ENCODE measurements at regions of chr1 and their contacts with region 1.

Region 1: DNA sequence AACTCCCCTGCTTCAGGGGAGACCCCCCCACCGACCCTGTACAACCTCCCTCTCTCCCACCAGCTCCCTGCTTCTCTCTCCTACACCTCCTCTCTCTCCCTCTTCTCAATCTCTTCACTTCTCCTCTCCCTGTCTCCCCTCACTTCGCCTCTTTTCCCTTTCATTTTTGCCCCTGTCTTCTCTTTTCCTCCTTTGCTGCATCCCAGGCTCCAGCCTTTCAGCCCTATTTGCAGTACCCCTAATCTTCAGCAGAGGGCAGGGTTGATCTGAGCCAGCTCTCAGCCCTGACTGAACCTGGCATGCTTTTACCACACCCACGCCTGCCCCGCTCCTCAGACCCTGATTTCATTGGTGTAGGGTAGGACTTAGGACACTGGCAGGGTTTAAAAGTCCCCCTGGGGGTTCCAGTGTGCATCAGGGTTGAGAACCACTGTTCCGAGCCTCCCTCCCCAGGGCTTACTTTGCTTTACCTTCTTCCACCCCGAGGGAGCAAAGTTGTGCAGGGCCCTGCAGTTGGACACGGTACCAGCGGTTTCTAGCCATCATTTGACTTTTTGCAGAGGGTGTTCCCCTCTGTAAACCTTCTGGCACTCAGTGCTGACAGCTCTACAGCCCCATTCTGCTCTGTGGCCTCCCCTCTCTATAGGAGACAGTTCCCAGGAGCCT is 67.3 kb upstream of the CNTN2 start:
- DNase-seq: peak in 1 of 2 donors; percentile 44
- ATAC-seq: peak in 7 of 8 donors; percentile 66 to 80 (median 73)
- H3K4me3 ChIP-seq: no peak overlapping the region
- H3K27ac ChIP-seq: no peak overlapping the region
- H3K4me1 ChIP-seq: peaks cover 0 to 27% (median 0%) of the 10 kb centered on the region in 9 donors
- H3K27me3 ChIP-seq: peaks cover 0 to 5% (median 0%) of the 10 kb centered on the region in 7 donors
- CTCF ChIP-seq: peak; percentile 58 to 88 (median 81)

Region 2: GRCh38 chr1:205056188-205056611 is 80.5 kb after region 1 on chr1:
- intact Hi-C with region 1: loop called in 2 of 10 experiments (anchors 5 kb)
- DNase-seq: no peak
- ATAC-seq: no peak
- H3K4me3 ChIP-seq: no peak overlapping the region
- H3K27ac ChIP-seq: no peak overlapping the region
- H3K4me1 ChIP-seq: no peaks in the 10 kb centered on the region
- H3K27me3 ChIP-seq: peaks cover 0 to 23% (median 14%) of the 10 kb centered on the region in 7 donors
- CTCF ChIP-seq: no peak

Region 3: DNA sequence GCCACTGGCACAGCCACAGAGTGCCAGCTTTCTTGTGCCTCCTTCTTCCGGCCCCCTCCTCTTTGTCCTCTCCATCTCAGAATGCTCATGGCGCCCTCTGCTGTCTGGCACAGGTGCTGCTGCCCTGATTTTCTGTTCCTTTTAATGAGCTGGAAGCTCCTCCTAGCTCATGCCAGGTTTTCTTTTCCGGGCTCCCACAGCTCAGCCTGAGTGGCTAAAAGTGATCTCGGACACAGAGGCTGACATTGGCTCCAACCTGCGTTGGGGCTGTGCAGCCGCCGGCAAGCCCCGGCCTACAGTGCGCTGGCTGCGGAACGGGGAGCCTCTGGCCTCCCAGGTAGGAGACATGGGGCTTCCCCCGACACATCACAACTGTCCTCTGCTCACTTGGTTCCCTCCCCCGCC is 86.0 kb after region 1 on chr1:
- intact Hi-C with region 1: loop called in 2 of 10 experiments (anchors 5 kb)
- DNase-seq: peak; percentile 70 to 74
- ATAC-seq: peak; percentile 55 to 81 (median 70)
- H3K4me3 ChIP-seq: no peak overlapping the region
- H3K27ac ChIP-seq: no peak overlapping the region
- H3K4me1 ChIP-seq: peaks cover 0 to 7% (median 4%) of the 10 kb centered on the region in 9 donors
- H3K27me3 ChIP-seq: no peaks in the 10 kb centered on the region
- CTCF ChIP-seq: peak; percentile 46 to 95 (median 88)

Region 4: DNA sequence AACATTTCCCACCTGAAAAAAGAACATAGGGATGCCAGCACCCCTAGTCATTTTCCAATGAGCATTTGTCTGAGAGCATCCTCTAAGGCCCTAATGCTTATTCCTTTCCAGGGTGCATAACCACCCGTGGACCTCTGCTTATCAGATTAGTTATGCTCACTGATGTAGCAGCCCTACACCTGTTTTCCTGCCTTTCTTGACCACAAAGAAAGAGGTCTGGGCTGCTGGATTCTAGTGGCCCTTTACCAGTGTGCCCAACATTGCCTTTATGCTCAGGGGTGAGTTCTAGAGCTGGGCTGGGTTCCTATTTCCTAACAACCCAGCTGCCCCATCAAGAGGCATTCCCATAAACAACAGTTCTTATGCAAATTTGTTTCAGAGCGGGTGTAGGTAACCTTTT is 894.5 kb after region 1 on chr1:
- intact Hi-C with region 1: no loop called
- DNase-seq: no peak
- ATAC-seq: no peak
- H3K4me3 ChIP-seq: no peak overlapping the region
- H3K27ac ChIP-seq: no peak overlapping the region
- H3K4me1 ChIP-seq: no peaks in the 10 kb centered on the region
- H3K27me3 ChIP-seq: no peaks in the 10 kb centered on the region
- CTCF ChIP-seq: no peak